Prostate gland (tissue), 2 donors: ENCODE measurements at regions of chr9 and their contacts with region 1.

Region 1: GRCh38 chr9:124257844-124258606 is at the start of gene NEK6:
- DNase-seq: no peak
- H3K4me3 ChIP-seq: peak within 1 kb of the TSS; percentile 67 to 76
- H3K27ac ChIP-seq: peak within 1 kb of the TSS; percentile 85 to 90
- H3K4me1 ChIP-seq: peaks cover 7% of the 10 kb centered on the region
- H3K27me3 ChIP-seq: no peaks in the 10 kb centered on the region
- CTCF ChIP-seq: no peak
- POLR2A ChIP-seq: peak; percentile 20
- total RNA-seq, gene NEK6: 32.3 to 44.2 TPM

Region 2: DNA sequence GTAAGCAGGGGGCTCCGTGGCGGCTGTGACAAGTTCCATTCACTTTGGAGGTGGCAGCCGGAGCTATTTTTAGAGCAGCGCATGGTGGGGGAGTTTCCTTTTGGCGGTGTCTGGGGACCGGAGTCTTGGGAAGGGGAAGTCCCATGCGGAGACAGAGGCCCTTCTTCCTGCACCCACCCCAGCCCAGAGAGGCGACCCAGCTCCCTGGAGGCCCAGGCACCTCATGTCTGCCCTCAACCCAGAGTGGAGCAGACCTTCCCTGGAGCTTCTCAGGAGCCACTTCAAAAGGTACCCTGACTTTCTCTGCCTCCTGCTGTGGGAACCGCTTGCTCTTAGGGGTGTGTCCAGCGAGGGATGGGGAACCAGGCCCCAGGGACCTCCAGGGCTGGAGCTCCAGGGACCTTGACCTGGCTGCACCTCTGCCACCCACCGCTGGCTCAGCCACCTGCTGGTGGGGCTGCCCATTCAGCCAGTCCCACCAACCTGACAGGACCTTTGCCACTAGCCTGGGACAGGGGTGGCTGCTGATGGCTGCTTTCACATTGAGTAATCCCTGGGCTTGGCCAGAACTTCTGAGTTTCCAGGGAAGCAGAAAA is 33.9 kb after region 1 on chr9:
- intact Hi-C with region 1: loop called (anchors 5 kb)
- DNase-seq: no peak
- H3K4me3 ChIP-seq: no peak overlapping the region
- H3K27ac ChIP-seq: no peak overlapping the region
- H3K4me1 ChIP-seq: peaks cover 6% of the 10 kb centered on the region
- H3K27me3 ChIP-seq: no peaks in the 10 kb centered on the region
- CTCF ChIP-seq: no peak
- POLR2A ChIP-seq: no peak

Region 3: GRCh38 chr9:124330011-124330697 is 72.1 kb after region 1 on chr9:
- intact Hi-C with region 1: no loop called
- DNase-seq: no peak
- H3K4me3 ChIP-seq: no peak overlapping the region
- H3K27ac ChIP-seq: no peak overlapping the region
- H3K4me1 ChIP-seq: no peaks in the 10 kb centered on the region
- H3K27me3 ChIP-seq: no peaks in the 10 kb centered on the region
- CTCF ChIP-seq: no peak
- POLR2A ChIP-seq: no peak

Region 4: DNA sequence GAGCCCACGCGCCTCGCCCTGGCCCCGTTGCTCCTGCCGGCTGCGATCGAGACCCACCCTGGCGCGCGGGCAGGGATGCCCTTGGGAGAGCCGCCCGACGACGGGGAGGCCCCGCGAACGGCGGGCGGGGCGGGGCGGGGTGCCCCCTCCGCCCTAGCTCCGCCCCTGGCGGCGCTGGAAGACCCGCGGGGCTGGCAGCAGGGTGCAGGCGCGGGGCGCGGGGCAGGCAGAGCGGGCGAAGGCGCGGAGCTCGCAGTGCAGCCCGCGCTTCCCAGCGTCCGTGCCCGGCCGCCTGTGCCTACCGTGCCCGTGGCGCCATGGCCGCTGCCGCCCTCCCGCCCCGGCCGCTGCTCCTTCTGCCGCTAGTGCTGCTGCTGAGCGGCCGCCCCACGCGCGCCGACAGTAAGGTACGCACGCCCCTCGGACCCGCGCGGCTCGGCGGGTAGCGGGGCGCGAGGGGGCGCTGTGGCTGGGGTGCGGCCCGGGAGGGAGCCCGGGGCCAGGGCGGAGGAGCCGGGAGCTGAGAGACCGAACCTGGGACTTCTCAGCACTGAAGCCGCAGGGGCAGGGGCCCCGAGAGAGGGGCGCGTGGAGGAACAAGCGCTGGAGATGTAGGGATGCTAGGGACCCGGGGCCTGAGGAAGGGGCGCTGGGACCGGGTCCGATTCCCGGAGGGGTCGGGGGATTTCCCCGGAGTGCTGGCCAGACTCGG is 519.1 kb after region 1 on chr9 and contains the start of gene OLFML2A:
- intact Hi-C with region 1: no loop called
- DNase-seq: no peak
- H3K4me3 ChIP-seq: peak within 1 kb of the TSS; percentile 34 to 46
- H3K27ac ChIP-seq: peak within 1 kb of the TSS; percentile 20 to 45
- H3K4me1 ChIP-seq: no peaks in the 10 kb centered on the region
- H3K27me3 ChIP-seq: peaks cover 2% of the 10 kb centered on the region
- CTCF ChIP-seq: peak in 3 of 4 experiments; percentile 16 to 63 (median 37)
- POLR2A ChIP-seq: peak; percentile 44
- total RNA-seq, gene OLFML2A: 16.7 to 18.5 TPM